Panc1 (cell line): ENCODE measurements at regions of chr11 and their contacts with region 1.

Region 1: GRCh38 chr11:92948116-92948515 is 21.3 kb upstream of the MTNR1B start:
- DNase-seq: no peak
- ATAC-seq: no peak
- H3K4me3 ChIP-seq: no peak overlapping the region
- H3K27ac ChIP-seq: no peak overlapping the region
- H3K4me1 ChIP-seq: no peaks in the 10 kb centered on the region
- H3K27me3 ChIP-seq: no peaks in the 10 kb centered on the region
- CTCF ChIP-seq: no peak

Region 2: DNA sequence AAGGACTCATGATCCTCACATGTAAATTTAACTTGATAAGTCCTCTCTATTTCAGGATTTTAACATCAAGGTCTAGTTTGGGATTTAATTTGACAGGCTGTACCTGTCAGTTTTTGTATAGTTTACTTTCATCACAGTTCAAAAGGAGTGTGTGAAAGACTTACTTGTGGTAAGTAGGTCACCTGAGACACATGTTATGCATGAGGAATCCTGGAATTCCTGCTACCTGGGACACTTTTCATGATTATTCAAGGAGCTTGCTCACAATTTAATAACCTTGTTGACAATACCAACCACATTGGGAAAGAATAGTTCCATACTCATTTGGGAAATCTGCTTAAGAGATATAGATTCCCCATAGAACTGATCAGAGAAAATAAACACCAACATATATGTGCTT is 265.5 kb after region 1 on chr11:
- CTCF ChIA-PET with region 1: no interaction called
- POLR2A ChIA-PET with region 1: no interaction called
- in situ Hi-C with region 1: no loop called
- intact Hi-C with region 1: loop called (anchors 5 kb)
- DNase-seq: no peak
- ATAC-seq: no peak
- H3K4me3 ChIP-seq: no peak overlapping the region
- H3K27ac ChIP-seq: no peak overlapping the region
- H3K4me1 ChIP-seq: no peaks in the 10 kb centered on the region
- H3K27me3 ChIP-seq: peaks cover 24% of the 10 kb centered on the region
- CTCF ChIP-seq: no peak